Sigmoid colon (tissue), 7 donors: ENCODE measurements at regions of chrX and their contacts with region 1.

Region 1: GRCh38 chrX:23667239-23668177 is at the start of gene PRDX4:
- DNase-seq: peak; percentile 96
- H3K4me3 ChIP-seq: peak within 1 kb of the TSS; percentile 47 to 67 (median 66)
- H3K27ac ChIP-seq: peak within 1 kb of the TSS; percentile 75 to 82 (median 80)
- H3K4me1 ChIP-seq: peaks cover 0 to 16% (median 2%) of the 10 kb centered on the region in 4 donors
- H3K27me3 ChIP-seq: no peaks in the 10 kb centered on the region
- CTCF ChIP-seq: no peak
- EP300 ChIP-seq: peak in 1 of 4 donors; percentile 55
- POLR2A ChIP-seq: peak in 1 of 2 donors; percentile 18
- total RNA-seq, gene PRDX4: 54.2 to 67.0 (median 57.2) TPM

Region 2: GRCh38 chrX:23554304-23554703 is 113.2 kb before region 1 on chrX:
- intact Hi-C with region 1: no loop called
- DNase-seq: no peak
- H3K4me3 ChIP-seq: no peak overlapping the region
- H3K27ac ChIP-seq: no peak overlapping the region
- H3K4me1 ChIP-seq: no peaks in the 10 kb centered on the region
- H3K27me3 ChIP-seq: no peaks in the 10 kb centered on the region
- CTCF ChIP-seq: peak in 3 of 4 experiments; percentile 25 to 35 (median 29)
- EP300 ChIP-seq: no peak
- POLR2A ChIP-seq: no peak

Region 3: GRCh38 chrX:24150051-24150790 is 482.7 kb after region 1 on chrX:
- intact Hi-C with region 1: no loop called
- DNase-seq: peak; percentile 97
- H3K4me3 ChIP-seq: peak overlapping the region; percentile 63 to 86 (median 73)
- H3K27ac ChIP-seq: peak overlapping the region; percentile 95 to 98 (median 96)
- H3K4me1 ChIP-seq: peaks cover 0 to 78% (median 46%) of the 10 kb centered on the region in 4 donors
- H3K27me3 ChIP-seq: no peaks in the 10 kb centered on the region
- CTCF ChIP-seq: peak; percentile 13 to 47 (median 36)
- EP300 ChIP-seq: no peak
- POLR2A ChIP-seq: peak in 1 of 2 donors; percentile 23

Region 4: DNA sequence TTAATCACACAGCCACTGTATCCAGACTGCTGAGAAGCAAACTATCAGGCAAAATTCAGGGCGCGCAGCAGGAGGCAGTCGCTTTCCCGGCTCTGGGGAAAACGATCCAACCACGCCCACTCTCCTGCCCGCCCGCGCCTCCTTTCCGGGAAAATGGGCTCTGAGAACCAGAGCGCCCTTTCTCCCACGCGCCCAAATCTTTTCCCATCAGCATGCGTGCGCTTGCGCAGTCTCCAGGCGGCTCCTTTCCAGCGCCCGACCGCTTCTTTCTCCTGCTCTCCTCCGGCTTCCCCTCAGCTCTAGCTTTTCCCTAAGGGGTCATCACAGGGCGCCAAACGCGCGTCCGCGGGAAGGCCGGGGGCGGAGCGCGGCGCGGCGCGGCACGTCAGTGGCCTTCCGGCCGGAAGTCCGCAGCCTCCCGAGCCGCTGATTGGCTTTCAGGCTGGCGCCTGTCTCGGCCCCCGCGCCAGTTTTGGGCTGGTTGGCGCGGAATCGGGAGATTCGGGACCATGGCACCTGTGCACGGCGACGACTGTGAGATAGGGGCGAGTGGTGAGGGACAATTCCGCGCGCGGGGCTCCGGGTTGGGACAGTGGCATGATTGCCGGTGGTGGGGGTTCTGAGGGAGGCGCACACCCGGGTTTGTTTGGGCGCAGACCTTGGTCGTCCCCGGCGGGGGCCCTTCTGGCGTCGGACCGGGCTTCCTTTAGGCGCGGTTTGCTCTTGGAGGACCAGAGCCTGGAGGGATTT is 1026.1 kb after region 1 on chrX and contains the start of gene POLA1:
- intact Hi-C with region 1: loop called (anchors 5 kb)
- DNase-seq: peak; percentile 96
- H3K4me3 ChIP-seq: peak within 1 kb of the TSS; percentile 57 to 66 (median 60)
- H3K27ac ChIP-seq: peak within 1 kb of the TSS; percentile 74 to 90 (median 86)
- H3K4me1 ChIP-seq: peaks cover 0 to 9% (median 4%) of the 10 kb centered on the region in 4 donors
- H3K27me3 ChIP-seq: no peaks in the 10 kb centered on the region
- CTCF ChIP-seq: no peak
- EP300 ChIP-seq: peak in 1 of 4 donors; percentile 34
- POLR2A ChIP-seq: no peak
- total RNA-seq, gene POLA1: 11.4 to 15.0 (median 12.3) TPM